T-cell (primary cell): ENCODE measurements at regions of chr1 and their contacts with region 1.

Region 1: GRCh38 chr1:90721210-90722194 is 4.4 kb upstream of the BARHL2 start:
- DNase-seq: peak in 15 of 35 experiments; percentile 25 to 66 (median 30)
- ATAC-seq: peak in 2 of 4 experiments; percentile 32 to 40
- H3K4me3 ChIP-seq: no peak overlapping the region
- H3K4me3 Mint-ChIP-seq: no peak overlapping the region
- H3K27ac ChIP-seq: no peak overlapping the region
- H3K27ac Mint-ChIP-seq: no peak overlapping the region
- H3K4me1 ChIP-seq: peaks cover 2 to 62% of the 10 kb centered on the region in 2 experiments
- H3K4me1 Mint-ChIP-seq: peaks cover 50 to 71% (median 57%) of the 10 kb centered on the region in 3 donors
- H3K27me3 ChIP-seq: peaks cover 13 to 80% of the 10 kb centered on the region in 2 experiments
- H3K27me3 Mint-ChIP-seq: peaks cover 77 to 88% of the 10 kb centered on the region in 2 donors

Region 2: DNA sequence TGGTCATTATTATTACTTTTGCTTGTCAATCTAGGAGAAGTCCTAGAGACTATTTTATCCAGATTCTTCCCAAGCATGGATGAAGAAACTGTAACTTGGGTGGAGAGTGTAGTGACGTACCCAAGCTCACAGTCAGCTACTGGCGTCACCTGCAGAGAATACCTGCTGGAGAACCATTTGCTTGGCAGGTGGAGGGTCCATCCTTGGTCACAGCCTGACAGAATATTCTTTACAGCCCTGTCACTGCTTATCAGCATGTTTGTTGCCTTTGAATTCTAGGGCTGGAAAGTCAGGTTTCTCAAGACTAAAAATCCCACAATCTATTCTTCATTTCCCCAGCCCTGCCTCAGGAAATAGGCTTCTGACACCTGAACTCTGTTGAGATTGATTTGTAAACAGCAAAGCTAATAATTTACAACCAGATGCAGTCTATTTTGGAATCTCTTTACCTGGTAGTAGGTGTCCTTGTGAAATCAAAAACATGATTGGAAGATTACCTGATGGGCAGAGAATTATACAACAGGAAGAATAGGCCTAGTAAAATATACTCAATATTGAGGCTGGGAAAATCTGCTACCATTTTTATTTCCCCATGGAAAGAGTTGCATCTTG is 400.7 kb after region 1 on chr1:
- CTCF ChIA-PET with region 1: interaction called in 1 of 2 experiments, 11 read pairs
- POLR2A ChIA-PET with region 1: no interaction called
- DNase-seq: no peak
- ATAC-seq: no peak
- H3K4me3 ChIP-seq: no peak overlapping the region
- H3K4me3 Mint-ChIP-seq: no peak overlapping the region
- H3K27ac ChIP-seq: no peak overlapping the region
- H3K27ac Mint-ChIP-seq: no peak overlapping the region
- H3K4me1 ChIP-seq: no peaks in the 10 kb centered on the region
- H3K4me1 Mint-ChIP-seq: peaks cover 0 to 9% (median 0%) of the 10 kb centered on the region in 3 donors
- H3K27me3 ChIP-seq: no peaks in the 10 kb centered on the region
- H3K27me3 Mint-ChIP-seq: peaks cover 3% of the 10 kb centered on the region in 2 donors